Left ventricle myocardium inferior (tissue), 1 donor: ENCODE measurements at regions of chr6 and their contacts with region 1.

Region 1: GRCh38 chr6:125844989-125845388 is 54.2 kb downstream of the NCOA7 start:
- DNase-seq: no peak
- H3K4me3 ChIP-seq: peak overlapping the region; percentile 31
- H3K27ac ChIP-seq: peak overlapping the region; percentile 74
- H3K4me1 ChIP-seq: peaks cover 46% of the 10 kb centered on the region
- H3K27me3 ChIP-seq: no peaks in the 10 kb centered on the region
- CTCF ChIP-seq: no peak

Region 2: GRCh38 chr6:125790358-125791150 is 54.4 kb before region 1 on chr6 and contains the start of gene NCOA7:
- intact Hi-C with region 1: loop called (anchors 10 kb)
- DNase-seq: peak; percentile 83
- H3K4me3 ChIP-seq: peak within 1 kb of the TSS; percentile 94
- H3K27ac ChIP-seq: peak within 1 kb of the TSS; percentile 96
- H3K4me1 ChIP-seq: peaks cover 60% of the 10 kb centered on the region
- H3K27me3 ChIP-seq: no peaks in the 10 kb centered on the region
- CTCF ChIP-seq: peak; percentile 26
- total RNA-seq, gene NCOA7: 10.3 TPM

Region 3: DNA sequence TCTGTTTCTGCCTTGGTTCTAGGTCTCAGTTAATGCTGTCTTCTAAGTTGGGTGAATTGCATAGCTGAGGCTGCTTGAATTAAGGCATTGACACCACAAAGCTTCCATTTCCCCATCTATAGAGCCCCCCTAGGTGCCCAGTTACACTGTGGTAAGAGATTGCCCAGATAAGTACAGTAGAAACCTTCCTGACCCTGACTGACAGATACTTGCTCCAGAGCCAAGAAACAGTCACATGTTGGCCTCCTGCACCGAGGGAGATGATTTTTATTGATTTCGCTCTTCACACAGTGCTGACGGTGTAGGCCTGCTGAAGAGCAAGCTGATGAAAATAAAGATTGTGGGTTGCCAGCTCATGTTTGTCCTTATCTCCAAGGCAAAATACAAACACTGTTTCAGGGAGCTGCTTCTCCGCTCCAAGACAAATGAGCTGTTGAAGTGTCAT is 209.3 kb after region 1 on chr6:
- intact Hi-C with region 1: no loop called
- DNase-seq: no peak
- H3K4me3 ChIP-seq: no peak overlapping the region
- H3K27ac ChIP-seq: no peak overlapping the region
- H3K4me1 ChIP-seq: peaks cover 6% of the 10 kb centered on the region
- H3K27me3 ChIP-seq: no peaks in the 10 kb centered on the region
- CTCF ChIP-seq: no peak